Ovary (tissue), 10 donors: ENCODE measurements at regions of chr9 and their contacts with region 1.

Region 1: GRCh38 chr9:38026021-38026809 is 42.8 kb downstream of the SHB start:
- DNase-seq: peak; percentile 38 to 68 (median 57)
- H3K4me3 ChIP-seq: no peak overlapping the region
- H3K27ac ChIP-seq: peak overlapping the region in 1 of 2 donors; percentile 48
- H3K4me1 ChIP-seq: peaks cover 12% of the 10 kb centered on the region
- H3K27me3 ChIP-seq: no peaks in the 10 kb centered on the region
- CTCF ChIP-seq: no peak
- EP300 ChIP-seq: no peak
- POLR2A ChIP-seq: no peak

Region 2: DNA sequence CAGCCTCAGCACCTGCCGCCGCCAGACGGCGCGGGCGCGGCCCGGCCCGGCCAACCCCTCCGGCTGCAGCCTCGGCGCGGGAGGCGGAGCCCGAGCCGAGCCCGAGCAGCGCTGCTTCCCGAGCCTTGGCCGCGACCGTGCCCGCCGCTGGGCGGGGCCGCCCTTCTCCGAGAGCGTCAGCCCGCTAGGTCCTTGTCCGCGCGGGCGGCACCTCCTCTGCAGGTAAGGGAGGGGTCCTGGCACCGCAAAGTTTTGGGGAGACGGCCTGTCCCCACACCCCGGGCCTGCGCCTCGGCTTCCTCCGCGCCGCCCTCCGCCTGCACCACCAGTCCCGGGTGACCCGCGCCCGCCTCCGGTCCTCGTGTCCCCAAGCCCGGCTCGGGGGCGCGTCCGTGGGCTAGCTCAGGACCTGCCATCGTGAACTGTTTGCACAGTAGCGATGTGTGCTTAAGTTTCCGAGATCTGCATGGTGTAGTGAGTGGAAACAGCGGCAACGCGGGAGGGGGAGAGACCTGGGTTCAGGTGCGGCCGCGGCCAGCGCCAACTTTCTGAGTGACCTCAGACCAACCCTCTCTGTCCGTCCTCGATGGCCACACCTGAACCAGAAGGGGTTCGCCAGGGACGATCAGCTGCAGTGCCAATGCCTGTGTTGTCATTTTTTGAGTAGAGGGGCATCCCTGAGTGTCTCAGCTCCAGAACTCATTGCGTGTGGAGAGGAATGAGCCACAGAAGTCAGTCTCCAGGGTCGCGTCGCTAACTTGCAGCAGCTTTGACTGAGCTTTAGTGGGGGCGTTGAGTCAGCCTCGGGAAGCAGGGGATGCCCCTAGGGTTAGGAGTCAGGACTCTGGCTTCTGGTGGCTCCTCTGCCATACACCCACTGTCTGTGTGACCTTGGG is 375.1 kb before region 1 on chr9 and contains the start of gene FRMPD1:
- intact Hi-C with region 1: no loop called
- DNase-seq: peak; percentile 20 to 70 (median 26)
- H3K4me3 ChIP-seq: peak within 1 kb of the TSS; percentile 39
- H3K27ac ChIP-seq: no peak within 1 kb of the TSS
- H3K4me1 ChIP-seq: peaks cover 7% of the 10 kb centered on the region
- H3K27me3 ChIP-seq: no peaks in the 10 kb centered on the region
- CTCF ChIP-seq: no peak
- EP300 ChIP-seq: no peak
- POLR2A ChIP-seq: no peak
- total RNA-seq, gene FRMPD1: 0.17 to 0.46 (median 0.26) TPM in 3 of 7 donors, not detected in the others

Region 3: GRCh38 chr9:37760416-37761161 is 265.6 kb before region 1 on chr9:
- intact Hi-C with region 1: no loop called
- DNase-seq: no peak
- H3K4me3 ChIP-seq: no peak overlapping the region
- H3K27ac ChIP-seq: no peak overlapping the region
- H3K4me1 ChIP-seq: no peaks in the 10 kb centered on the region
- H3K27me3 ChIP-seq: no peaks in the 10 kb centered on the region
- CTCF ChIP-seq: no peak
- EP300 ChIP-seq: no peak
- POLR2A ChIP-seq: no peak

Region 4: DNA sequence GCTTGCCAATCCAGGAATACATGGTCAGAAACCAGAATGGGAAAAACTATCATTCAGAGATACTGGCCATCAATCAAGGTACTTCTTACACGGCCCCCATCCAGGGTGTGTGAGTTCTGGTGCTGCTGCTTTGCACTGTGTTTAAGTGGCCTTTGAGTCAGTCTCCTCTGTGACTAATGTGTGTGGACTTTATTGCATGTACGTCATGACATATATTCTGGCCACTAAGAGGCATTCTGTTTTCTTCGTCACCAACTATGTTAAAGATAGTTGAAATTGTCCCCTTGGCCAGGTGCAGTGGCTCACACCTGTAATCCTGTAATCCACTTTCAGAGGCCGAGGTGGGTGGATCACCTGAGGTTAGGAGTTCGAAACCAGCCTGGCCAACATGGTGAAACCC is 249.9 kb before region 1 on chr9:
- intact Hi-C with region 1: no loop called
- DNase-seq: no peak
- H3K4me3 ChIP-seq: no peak overlapping the region
- H3K27ac ChIP-seq: no peak overlapping the region
- H3K4me1 ChIP-seq: no peaks in the 10 kb centered on the region
- H3K27me3 ChIP-seq: no peaks in the 10 kb centered on the region
- CTCF ChIP-seq: no peak
- EP300 ChIP-seq: no peak
- POLR2A ChIP-seq: no peak

Region 5: GRCh38 chr9:37800631-37801286 is 225.5 kb before region 1 on chr9 and contains the start of gene DCAF10:
- intact Hi-C with region 1: no loop called
- DNase-seq: peak; percentile 75 to 92 (median 84)
- H3K4me3 ChIP-seq: peak within 1 kb of the TSS; percentile 99
- H3K27ac ChIP-seq: peak within 1 kb of the TSS; percentile 25 to 50
- H3K4me1 ChIP-seq: peaks cover 19% of the 10 kb centered on the region
- H3K27me3 ChIP-seq: no peaks in the 10 kb centered on the region
- CTCF ChIP-seq: no peak
- EP300 ChIP-seq: no peak
- POLR2A ChIP-seq: peak; percentile 72
- total RNA-seq, gene DCAF10: 15.9 to 39.8 (median 26.6) TPM

Region 6: GRCh38 chr9:37978983-37979382 is 47.2 kb before region 1 on chr9:
- intact Hi-C with region 1: loop called in 1 of 4 experiments (anchors 1 kb)
- DNase-seq: no peak
- H3K4me3 ChIP-seq: no peak overlapping the region
- H3K27ac ChIP-seq: no peak overlapping the region
- H3K4me1 ChIP-seq: no peaks in the 10 kb centered on the region
- H3K27me3 ChIP-seq: no peaks in the 10 kb centered on the region
- CTCF ChIP-seq: no peak
- EP300 ChIP-seq: no peak
- POLR2A ChIP-seq: no peak

Region 7: GRCh38 chr9:37984672-37985611 is 41.3 kb before region 1 on chr9:
- intact Hi-C with region 1: loop called in 1 of 4 experiments (anchors 5 kb)
- DNase-seq: no peak
- H3K4me3 ChIP-seq: no peak overlapping the region
- H3K27ac ChIP-seq: no peak overlapping the region
- H3K4me1 ChIP-seq: no peaks in the 10 kb centered on the region
- H3K27me3 ChIP-seq: no peaks in the 10 kb centered on the region
- CTCF ChIP-seq: no peak
- EP300 ChIP-seq: no peak
- POLR2A ChIP-seq: no peak